ENCODE measurements at regions of chr13 and their contacts with region 1.

Region 1: DNA sequence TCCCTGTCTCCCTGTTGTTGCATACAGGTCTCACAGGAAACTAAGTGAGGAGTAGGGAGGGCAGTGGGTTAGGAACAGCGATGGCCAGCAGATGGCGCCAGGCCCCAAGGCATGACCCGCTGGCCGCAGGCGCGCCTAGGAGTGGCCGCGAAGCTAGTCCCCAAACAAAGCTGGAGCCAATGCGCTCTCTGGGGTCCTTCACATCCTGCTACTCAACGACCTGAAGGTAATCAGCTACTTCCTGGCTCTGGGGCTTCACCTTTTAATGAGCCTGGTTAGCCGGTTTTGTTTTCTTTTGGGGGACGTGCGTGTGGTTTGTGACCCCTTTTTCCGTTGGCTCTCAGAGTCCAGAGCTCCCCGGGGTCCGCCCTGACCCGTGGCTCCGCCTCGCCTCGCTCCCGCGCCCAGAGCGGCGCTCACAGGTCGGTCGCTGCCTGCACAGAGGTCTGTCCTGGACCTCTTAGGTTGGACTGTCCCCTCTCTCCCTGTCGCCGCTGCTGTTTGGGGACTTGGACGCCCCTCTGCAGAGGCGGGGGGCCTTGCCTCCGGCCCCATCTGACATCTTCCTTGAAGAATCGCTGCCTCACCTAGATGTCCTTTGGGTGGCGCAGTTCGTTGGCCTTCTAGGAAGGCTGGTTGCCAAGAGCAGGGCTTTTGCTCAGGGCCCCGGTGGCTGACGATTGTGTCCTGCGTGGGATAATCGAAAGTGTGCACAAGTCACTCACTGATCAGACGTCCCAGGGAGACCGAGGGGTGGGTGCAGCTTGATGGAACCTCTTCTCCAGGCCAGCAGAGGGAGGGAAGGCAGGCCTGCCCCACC is 62.1 kb upstream of the GTF3A start:
- H3K4me3 ChIP-seq: peak overlapping the region; percentile 35
- H3K27ac ChIP-seq: no peak overlapping the region; the same call in 1 of the 2 replicates
- H3K4me1 ChIP-seq: no peaks in the 10 kb centered on the region
- CTCF ChIP-seq: peak; percentile 78

Region 2: GRCh38 chr13:26946684-26947343 is 415.5 kb before region 1 on chr13:
- CTCF ChIA-PET with region 1: interaction called, 94 read pairs
- POLR2A ChIA-PET with region 1: interaction called, 5 read pairs
- H3K4me3 ChIP-seq: no peak overlapping the region
- H3K27ac ChIP-seq: no peak overlapping the region
- H3K4me1 ChIP-seq: peaks cover 7% of the 10 kb centered on the region; the same call in 1 of the 2 replicates
- CTCF ChIP-seq: peak; percentile 80

Region 3: DNA sequence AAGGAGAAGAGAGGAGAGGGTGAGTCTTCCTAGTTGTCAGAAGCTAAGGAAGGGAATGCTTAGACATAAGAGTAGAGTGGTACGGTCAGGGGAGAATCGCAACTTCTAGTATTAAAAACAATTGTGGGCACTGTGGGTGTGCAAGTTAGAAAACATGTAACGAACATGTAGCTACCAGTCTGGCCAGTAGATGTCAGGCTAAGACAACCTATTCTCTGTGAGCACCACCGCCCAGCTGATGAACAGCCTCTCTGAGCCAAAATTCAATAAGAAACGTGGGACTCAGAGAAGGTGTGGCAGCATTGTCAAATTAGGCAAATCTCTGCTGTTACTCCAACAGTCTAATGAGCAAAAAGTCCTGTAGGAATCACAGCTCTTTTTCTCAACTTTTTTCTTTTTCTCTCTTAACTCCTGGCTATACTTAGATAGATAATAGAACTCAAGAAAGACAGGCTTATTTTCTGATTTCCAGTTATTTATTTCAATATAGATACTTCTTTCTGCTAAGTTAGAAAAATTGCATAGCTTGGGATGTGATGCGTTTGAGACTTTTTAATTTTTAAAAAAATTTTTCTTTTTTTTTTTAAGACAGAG is 376.9 kb before region 1 on chr13:
- CTCF ChIA-PET with region 1: interaction called, 124 read pairs
- POLR2A ChIA-PET with region 1: interaction called, 3 read pairs
- H3K4me3 ChIP-seq: no peak overlapping the region
- H3K27ac ChIP-seq: no peak overlapping the region
- H3K4me1 ChIP-seq: peaks cover 9% of the 10 kb centered on the region
- CTCF ChIP-seq: peak; percentile 60

Region 4: DNA sequence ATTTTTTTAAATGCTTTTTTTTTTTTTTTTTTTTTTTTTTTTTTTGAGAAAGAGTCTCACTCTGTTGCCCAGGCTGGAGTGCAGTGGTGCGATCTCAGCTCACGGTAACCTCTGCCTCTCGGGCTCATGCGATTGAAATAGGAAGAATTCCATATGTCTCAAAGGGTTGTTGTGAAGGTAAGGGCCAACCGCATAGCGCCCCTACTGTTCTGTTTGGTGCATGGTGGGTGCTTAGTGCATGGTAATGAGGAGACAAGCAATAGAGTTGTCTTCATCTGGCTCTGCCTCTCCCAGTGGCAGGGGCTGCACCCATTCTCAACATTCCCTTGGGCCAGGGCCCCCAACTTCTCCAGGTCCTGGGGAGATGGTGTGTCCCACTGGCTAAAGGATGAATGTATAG is 23.0 kb before region 1 on chr13:
- CTCF ChIA-PET with region 1: interaction called, 15 read pairs
- POLR2A ChIA-PET with region 1: no interaction called
- H3K4me3 ChIP-seq: no peak overlapping the region
- H3K27ac ChIP-seq: no peak overlapping the region
- H3K4me1 ChIP-seq: no peaks in the 10 kb centered on the region
- CTCF ChIP-seq: 0 out of 2 replicates have a peak, but pooled peaks have one; percentile 9

Region 5: GRCh38 chr13:27374650-27375049 is 12.4 kb after region 1 on chr13:
- CTCF ChIA-PET with region 1: interaction called, 15 read pairs
- POLR2A ChIA-PET with region 1: no interaction called
- H3K4me3 ChIP-seq: no peak overlapping the region
- H3K27ac ChIP-seq: no peak overlapping the region
- H3K4me1 ChIP-seq: no peaks in the 10 kb centered on the region
- CTCF ChIP-seq: no peak; the same call in 1 of the 2 replicates

Region 6: GRCh38 chr13:27379694-27380641 is 17.7 kb after region 1 on chr13:
- CTCF ChIA-PET with region 1: interaction called, 13 read pairs
- POLR2A ChIA-PET with region 1: interaction called, 4 read pairs
- H3K4me3 ChIP-seq: no peak overlapping the region
- H3K27ac ChIP-seq: no peak overlapping the region
- H3K4me1 ChIP-seq: no peaks in the 10 kb centered on the region; the same call in 1 of the 2 replicates
- CTCF ChIP-seq: peak; percentile 37; the same call in 1 of the 2 replicates

Region 7: GRCh38 chr13:27980280-27980998 is 618.2 kb after region 1 on chr13:
- CTCF ChIA-PET with region 1: interaction called, 49 read pairs
- POLR2A ChIA-PET with region 1: no interaction called
- H3K4me3 ChIP-seq: no peak overlapping the region
- H3K27ac ChIP-seq: no peak overlapping the region
- H3K4me1 ChIP-seq: no peaks in the 10 kb centered on the region
- CTCF ChIP-seq: no peak

Region 8: DNA sequence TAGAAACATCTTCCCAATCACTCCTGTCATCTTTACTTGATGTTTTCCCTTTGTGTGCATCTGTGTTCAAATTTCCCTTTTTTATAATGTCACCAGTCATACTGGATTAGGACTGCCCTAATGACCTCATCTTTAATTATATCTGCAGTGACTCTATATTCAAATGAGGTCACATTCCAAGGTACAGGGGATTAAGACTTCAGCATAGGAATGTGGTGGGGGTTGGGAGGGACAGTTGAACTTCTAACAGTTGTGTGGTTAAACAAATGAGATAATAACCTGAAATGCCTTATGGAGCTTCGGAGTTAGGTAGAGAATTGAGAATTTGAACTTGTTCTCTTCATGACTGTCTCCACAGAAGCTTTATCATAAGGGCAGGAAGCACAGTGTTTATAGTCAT is 799.1 kb after region 1 on chr13:
- CTCF ChIA-PET with region 1: no interaction called
- POLR2A ChIA-PET with region 1: no interaction called
- H3K4me3 ChIP-seq: no peak overlapping the region
- H3K27ac ChIP-seq: no peak overlapping the region
- H3K4me1 ChIP-seq: peaks cover 3% of the 10 kb centered on the region; the same call in 1 of the 2 replicates
- CTCF ChIP-seq: no peak

Measured in HEK293 (cell line).